ENCODE measurements at regions of chr1 and their contacts with region 1.

Region 1: DNA sequence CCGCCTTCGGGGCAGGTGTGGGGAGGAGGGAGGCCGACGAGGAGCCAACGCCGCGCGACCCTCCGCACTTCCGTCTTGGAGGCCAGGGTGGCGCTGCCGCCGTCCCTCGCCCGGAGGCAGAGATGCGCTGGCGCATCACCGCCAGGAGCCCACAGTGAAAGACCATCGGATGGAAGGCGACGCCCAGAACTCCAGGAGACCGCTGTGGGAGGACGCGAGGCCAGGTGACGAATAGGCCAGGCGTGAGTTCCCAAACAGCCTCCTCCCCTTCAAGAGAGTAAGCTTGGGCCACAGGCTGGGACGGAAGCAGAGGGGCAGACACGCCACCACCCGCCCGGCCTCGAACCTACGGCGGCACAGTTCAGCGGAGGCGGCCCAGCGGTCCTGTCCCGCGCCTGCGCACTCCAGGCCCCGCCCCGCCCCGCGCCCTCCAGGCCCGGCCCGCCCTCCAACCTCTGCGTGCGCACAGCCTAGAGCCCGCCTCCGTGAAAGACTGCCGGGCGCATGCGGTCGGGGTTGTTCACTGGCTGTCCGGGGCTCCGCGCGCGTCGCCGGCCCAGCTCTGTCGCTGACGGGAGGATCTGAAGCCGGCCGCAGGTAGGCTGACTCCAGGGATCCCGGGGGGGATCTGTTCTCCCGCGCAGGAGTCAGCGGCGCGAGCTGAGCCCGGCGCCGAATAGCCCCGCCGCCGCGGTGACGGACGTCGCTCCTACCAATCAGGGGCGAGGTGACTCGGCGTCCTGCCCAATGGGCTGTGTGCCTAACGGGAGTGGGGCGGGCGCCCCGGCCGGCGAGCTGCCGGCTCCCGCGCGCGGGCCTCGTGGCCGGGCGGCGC is at the start of gene CTPS1:
- H3K4me3 ChIP-seq: peak within 1 kb of the TSS; percentile 80
- H3K27ac ChIP-seq: peak within 1 kb of the TSS; percentile 94
- H3K4me1 ChIP-seq: 0 out of 2 replicates have a peak, but pooled peaks cover 4% of the 10 kb centered on the region
- CTCF ChIP-seq: peak; percentile 95

Region 2: GRCh38 chr1:40939320-40940059 is 40.0 kb before region 1 on chr1:
- CTCF ChIA-PET with region 1: no interaction called
- POLR2A ChIA-PET with region 1: no interaction called
- H3K4me3 ChIP-seq: no peak overlapping the region
- H3K27ac ChIP-seq: no peak overlapping the region
- H3K4me1 ChIP-seq: no peaks in the 10 kb centered on the region
- CTCF ChIP-seq: no peak

Region 3: GRCh38 chr1:41003640-41004220 is 24.3 kb after region 1 on chr1:
- CTCF ChIA-PET with region 1: interaction called, 16 read pairs
- POLR2A ChIA-PET with region 1: interaction called, 30 read pairs
- H3K4me3 ChIP-seq: no peak overlapping the region
- H3K27ac ChIP-seq: peak overlapping the region; percentile 36; the same call in 1 of the 2 replicates
- H3K4me1 ChIP-seq: peaks cover 7% of the 10 kb centered on the region
- CTCF ChIP-seq: peak; percentile 77

Region 4: DNA sequence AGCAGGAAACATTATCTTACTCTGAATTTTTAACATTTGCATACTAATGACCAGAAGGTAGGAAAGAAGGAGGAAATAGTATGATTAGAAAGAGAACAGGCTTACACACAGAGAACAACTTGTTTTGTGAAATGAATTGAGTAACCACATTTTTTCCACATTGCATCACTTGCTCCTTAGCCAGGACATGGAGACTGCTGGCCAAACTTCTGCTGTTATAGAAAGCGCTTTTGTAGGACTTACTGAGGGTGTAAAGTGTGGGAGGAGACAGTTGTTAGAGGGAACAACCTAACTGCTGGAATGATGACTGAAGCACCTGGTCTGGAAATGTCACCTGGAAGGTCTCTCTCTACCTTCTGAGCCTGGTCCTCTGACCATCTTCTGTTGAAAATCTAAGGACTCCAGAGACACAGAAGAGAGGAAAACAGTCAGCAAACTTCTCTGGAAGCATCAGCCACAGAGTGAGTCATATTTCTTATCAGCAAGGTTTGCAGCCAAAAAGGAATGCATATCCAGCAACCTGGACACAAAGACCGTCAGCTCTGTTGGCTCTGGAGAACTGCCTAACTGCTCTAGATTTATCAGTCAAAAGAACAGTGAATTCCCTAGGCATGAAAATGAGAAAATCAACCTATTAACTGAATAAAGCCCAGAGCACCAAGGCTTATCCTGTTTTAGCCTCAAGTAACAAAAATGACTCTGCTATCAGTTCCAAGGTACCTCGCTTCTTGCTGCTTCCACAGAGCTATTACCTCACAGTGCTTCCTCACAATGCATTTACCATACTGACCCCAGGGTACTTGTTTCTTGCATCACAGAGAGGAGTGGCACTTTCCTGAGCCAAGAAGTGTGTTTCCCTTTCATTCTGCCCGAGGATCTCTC is 130.1 kb after region 1 on chr1:
- CTCF ChIA-PET with region 1: no interaction called
- POLR2A ChIA-PET with region 1: no interaction called
- H3K4me3 ChIP-seq: no peak overlapping the region
- H3K27ac ChIP-seq: no peak overlapping the region
- H3K4me1 ChIP-seq: no peaks in the 10 kb centered on the region
- CTCF ChIP-seq: no peak